ENCODE measurements at regions of chr3 and their contacts with region 1.

Region 1: DNA sequence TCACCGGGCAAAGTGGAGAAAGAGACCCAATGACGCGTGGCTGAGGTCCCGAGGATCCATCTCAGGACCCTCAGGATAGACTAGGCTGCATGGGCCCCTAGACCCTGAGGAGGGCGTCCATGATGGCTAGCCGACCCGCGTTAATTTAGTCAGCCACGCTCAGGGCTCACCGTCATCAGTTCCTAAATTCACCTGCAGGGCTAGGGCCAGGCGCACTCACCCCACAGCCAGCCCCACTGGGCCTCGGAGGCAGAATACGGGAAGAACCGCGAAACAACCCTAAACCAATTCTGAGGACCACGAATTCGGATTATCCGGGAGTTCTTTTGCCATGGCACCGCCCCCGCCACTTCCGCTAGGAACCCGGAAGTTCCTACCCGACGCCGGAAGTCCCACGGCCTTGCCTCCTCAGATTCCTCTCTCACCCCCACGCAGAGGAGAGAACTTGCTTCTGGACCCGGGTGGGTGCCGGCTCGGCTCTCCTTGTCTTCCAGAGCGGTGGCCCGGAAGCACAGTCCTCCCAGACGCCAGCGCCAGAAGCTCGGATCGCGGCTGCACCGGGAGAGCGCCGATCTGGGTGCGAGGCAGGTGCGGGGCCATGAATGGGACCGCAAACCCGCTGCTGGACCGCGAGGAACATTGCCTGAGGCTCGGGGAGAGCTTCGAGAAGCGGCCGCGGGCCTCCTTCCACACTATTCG is at the starts of genes EAF1 and METTL6:
- DNase-seq: peak; percentile 74
- ATAC-seq: peak; percentile 86
- H3K4me3 ChIP-seq: peak within 1 kb of the TSS; percentile 92
- H3K27ac ChIP-seq: peak within 1 kb of the TSS; percentile 93
- H3K4me1 ChIP-seq: peaks cover 1% of the 10 kb centered on the region; the same call in 1 of the 2 replicates
- H3K27me3 ChIP-seq: no peaks in the 10 kb centered on the region
- CTCF ChIP-seq: 0 out of 2 replicates have a peak, but pooled peaks have one; percentile 0
- POLR2A ChIP-seq: peak; percentile 75
- RAD21 ChIP-seq: no peak
- total RNA-seq, gene EAF1: 19.7 and 21.3 TPM in 2 replicates
- total RNA-seq, gene METTL6: 21.5 and 32.5 TPM in 2 replicates

Region 2: GRCh38 chr3:15092686-15093085 is 334.6 kb before region 1 on chr3:
- CTCF ChIA-PET with region 1: no interaction called
- POLR2A ChIA-PET with region 1: no interaction called
- dilution Hi-C with region 1: no loop called
- in situ Hi-C with region 1: no loop called
- intact Hi-C with region 1: no loop called
- DNase-seq: peak; percentile 35
- ATAC-seq: peak; percentile 29; the same call in 1 of the 2 replicates
- H3K4me3 ChIP-seq: no peak overlapping the region
- H3K27ac ChIP-seq: no peak overlapping the region
- H3K4me1 ChIP-seq: peaks cover 1% of the 10 kb centered on the region; the same call in 1 of the 2 replicates
- H3K27me3 ChIP-seq: no peaks in the 10 kb centered on the region
- CTCF ChIP-seq: no peak
- POLR2A ChIP-seq: no peak
- RAD21 ChIP-seq: no peak

Region 3: DNA sequence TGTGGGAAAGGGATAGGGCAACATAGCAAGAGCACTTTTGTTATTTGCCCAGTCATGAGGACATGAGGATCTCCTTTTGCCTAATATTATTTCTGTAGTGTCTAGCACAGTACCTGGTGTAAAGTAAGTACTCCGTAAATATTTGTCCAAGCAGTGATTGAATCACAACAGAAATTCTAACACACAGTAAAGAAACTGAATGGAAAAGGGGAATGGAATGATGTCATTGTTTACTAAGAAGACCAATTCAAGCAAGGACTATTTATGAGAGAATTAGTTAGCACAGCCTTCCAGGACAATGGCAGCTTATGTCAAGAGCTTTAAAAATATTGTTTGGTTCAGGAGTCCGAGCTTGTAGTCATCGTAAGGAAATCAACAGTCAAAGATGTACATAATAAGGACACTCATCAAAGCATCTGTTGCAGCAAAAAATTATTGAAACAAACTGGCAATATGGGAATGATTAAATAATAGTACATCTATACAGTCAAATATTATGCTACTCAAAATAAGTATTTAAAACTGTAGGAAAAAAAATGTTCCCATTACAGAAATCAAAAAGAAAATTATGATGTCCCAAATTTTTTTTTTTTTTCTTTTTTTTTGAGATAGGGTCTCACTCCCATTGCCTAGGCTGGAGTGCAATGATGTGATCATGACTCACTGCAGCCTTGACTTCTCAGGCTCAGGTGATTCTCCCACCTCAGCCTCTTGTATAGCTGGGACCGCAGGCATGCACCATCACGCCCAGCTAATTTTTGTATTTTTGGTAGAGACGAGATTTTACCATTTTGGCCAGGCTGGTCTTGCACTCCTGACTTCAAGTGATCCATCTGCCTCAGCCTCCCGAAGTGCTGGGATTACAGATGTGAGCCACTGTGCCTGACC is 203.4 kb before region 1 on chr3:
- CTCF ChIA-PET with region 1: no interaction called
- POLR2A ChIA-PET with region 1: no interaction called
- dilution Hi-C with region 1: no loop called
- in situ Hi-C with region 1: no loop called
- intact Hi-C with region 1: loop called (anchors 5 kb)
- DNase-seq: peak; percentile 64
- ATAC-seq: peak; percentile 81
- H3K4me3 ChIP-seq: no peak overlapping the region
- H3K27ac ChIP-seq: no peak overlapping the region
- H3K4me1 ChIP-seq: no peaks in the 10 kb centered on the region
- H3K27me3 ChIP-seq: no peaks in the 10 kb centered on the region
- CTCF ChIP-seq: no peak
- POLR2A ChIP-seq: no peak
- RAD21 ChIP-seq: no peak

Region 4: DNA sequence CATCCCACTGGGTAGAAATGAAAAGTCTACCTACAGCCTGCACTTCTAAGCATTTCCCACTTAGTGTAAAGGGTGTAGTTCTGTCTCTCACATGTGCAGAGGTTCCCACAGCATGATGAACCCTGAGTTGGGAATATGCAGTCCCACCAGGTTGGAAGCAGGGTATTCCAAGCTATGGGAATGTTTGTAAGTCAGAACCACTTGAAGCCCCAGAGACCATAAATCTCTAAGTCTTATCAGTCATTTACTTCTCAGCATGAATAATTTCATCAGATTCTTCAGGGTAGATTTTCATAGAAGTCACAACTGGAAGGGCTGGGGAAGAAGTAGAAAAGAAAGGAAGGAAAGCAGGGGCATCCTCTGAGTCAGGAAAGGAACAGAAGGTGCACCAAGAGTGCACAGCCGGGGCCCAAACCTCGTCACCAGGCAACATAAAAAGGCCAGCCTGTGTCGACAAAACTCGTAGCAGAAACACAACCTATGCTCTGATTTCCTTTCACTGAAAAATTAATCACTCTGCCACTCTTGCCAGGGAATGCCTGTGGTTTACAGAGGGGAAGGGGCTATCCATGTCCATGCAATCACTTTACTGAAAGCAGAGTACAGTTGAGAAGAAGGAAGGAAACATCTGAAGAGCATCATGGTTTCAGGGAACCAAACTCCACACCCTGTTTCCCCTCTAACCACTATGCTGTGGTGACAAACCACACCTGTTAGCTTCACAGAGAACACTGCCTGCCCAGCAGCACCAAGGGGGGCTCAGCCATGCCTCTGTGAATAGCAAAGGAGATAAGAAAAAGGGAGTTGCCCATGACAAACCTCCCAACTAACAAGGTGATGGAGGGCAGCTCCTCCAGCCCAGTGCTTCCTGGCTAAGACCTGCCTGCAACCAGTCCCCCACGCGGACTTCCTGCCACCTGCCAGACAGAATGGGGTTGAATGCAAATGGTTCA is 135.5 kb before region 1 on chr3:
- CTCF ChIA-PET with region 1: no interaction called
- POLR2A ChIA-PET with region 1: no interaction called
- dilution Hi-C with region 1: no loop called
- in situ Hi-C with region 1: no loop called
- intact Hi-C with region 1: no loop called
- DNase-seq: no peak
- ATAC-seq: no peak
- H3K4me3 ChIP-seq: no peak overlapping the region
- H3K27ac ChIP-seq: no peak overlapping the region
- H3K4me1 ChIP-seq: peaks cover 7% of the 10 kb centered on the region
- H3K27me3 ChIP-seq: no peaks in the 10 kb centered on the region
- CTCF ChIP-seq: no peak
- POLR2A ChIP-seq: no peak
- RAD21 ChIP-seq: no peak

Region 5: DNA sequence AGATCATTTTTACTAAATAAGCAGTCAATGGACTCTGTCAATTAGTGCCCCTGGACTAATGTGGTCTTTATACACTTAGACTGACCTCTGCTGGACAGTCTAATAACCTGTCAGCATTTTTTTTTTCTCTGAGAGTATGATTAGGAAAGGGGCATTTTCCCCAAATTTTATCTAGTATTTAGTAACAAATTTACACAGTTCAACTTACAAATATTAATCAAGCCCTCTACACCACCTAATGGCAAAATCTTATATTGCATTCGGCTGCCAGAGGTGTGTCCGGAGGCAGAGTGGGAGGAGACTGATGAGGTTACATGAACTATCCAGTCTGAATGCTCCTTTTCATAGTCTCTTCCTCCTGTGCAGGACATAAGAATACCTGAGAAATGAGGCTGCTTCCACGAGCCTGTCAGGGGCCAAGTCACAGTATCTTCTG is 130.2 kb after region 1 on chr3:
- CTCF ChIA-PET with region 1: interaction called, 6 read pairs
- POLR2A ChIA-PET with region 1: no interaction called
- dilution Hi-C with region 1: no loop called
- in situ Hi-C with region 1: no loop called
- intact Hi-C with region 1: loop called (anchors 2 kb)
- DNase-seq: peak; percentile 75
- ATAC-seq: peak; percentile 99
- H3K4me3 ChIP-seq: no peak overlapping the region
- H3K27ac ChIP-seq: no peak overlapping the region
- H3K4me1 ChIP-seq: no peaks in the 10 kb centered on the region
- H3K27me3 ChIP-seq: no peaks in the 10 kb centered on the region
- CTCF ChIP-seq: peak; percentile 58
- POLR2A ChIP-seq: no peak
- RAD21 ChIP-seq: peak; percentile 52

Region 6: GRCh38 chr3:15693355-15693754 is 266.0 kb after region 1 on chr3:
- CTCF ChIA-PET with region 1: no interaction called
- POLR2A ChIA-PET with region 1: no interaction called
- dilution Hi-C with region 1: no loop called
- in situ Hi-C with region 1: no loop called
- intact Hi-C with region 1: no loop called
- DNase-seq: peak; percentile 19
- ATAC-seq: peak; percentile 29; the same call in 1 of the 2 replicates
- H3K4me3 ChIP-seq: no peak overlapping the region
- H3K27ac ChIP-seq: no peak overlapping the region
- H3K4me1 ChIP-seq: no peaks in the 10 kb centered on the region
- H3K27me3 ChIP-seq: no peaks in the 10 kb centered on the region
- CTCF ChIP-seq: peak; percentile 29; the same call in 1 of the 2 replicates
- POLR2A ChIP-seq: no peak
- RAD21 ChIP-seq: peak; percentile 27; the same call in 1 of the 2 replicates

Region 7: GRCh38 chr3:15831930-15832329 is 404.6 kb after region 1 on chr3:
- CTCF ChIA-PET with region 1: no interaction called
- POLR2A ChIA-PET with region 1: no interaction called
- dilution Hi-C with region 1: no loop called
- in situ Hi-C with region 1: no loop called
- intact Hi-C with region 1: no loop called
- DNase-seq: no peak
- ATAC-seq: no peak
- H3K4me3 ChIP-seq: no peak overlapping the region
- H3K27ac ChIP-seq: no peak overlapping the region
- H3K4me1 ChIP-seq: peaks cover 2% of the 10 kb centered on the region; the same call in 1 of the 2 replicates
- H3K27me3 ChIP-seq: no peaks in the 10 kb centered on the region
- CTCF ChIP-seq: no peak
- POLR2A ChIP-seq: no peak
- RAD21 ChIP-seq: no peak

Measured in IMR-90 (cell line).